ENCODE measurements at regions of chrX and their contacts with region 1.

Region 1: GRCh38 chrX:51837921-51838320 is 55.5 kb upstream of the MAGED1 start:
- DNase-seq: peak; percentile 3 to 8
- ATAC-seq: no peak
- H3K4me3 ChIP-seq: no peak overlapping the region
- H3K27ac ChIP-seq: no peak overlapping the region
- H3K4me1 ChIP-seq: no peaks in the 10 kb centered on the region
- H3K27me3 ChIP-seq: no peaks in the 10 kb centered on the region
- CTCF ChIP-seq: no peak
- POLR2A ChIP-seq: no peak

Region 2: DNA sequence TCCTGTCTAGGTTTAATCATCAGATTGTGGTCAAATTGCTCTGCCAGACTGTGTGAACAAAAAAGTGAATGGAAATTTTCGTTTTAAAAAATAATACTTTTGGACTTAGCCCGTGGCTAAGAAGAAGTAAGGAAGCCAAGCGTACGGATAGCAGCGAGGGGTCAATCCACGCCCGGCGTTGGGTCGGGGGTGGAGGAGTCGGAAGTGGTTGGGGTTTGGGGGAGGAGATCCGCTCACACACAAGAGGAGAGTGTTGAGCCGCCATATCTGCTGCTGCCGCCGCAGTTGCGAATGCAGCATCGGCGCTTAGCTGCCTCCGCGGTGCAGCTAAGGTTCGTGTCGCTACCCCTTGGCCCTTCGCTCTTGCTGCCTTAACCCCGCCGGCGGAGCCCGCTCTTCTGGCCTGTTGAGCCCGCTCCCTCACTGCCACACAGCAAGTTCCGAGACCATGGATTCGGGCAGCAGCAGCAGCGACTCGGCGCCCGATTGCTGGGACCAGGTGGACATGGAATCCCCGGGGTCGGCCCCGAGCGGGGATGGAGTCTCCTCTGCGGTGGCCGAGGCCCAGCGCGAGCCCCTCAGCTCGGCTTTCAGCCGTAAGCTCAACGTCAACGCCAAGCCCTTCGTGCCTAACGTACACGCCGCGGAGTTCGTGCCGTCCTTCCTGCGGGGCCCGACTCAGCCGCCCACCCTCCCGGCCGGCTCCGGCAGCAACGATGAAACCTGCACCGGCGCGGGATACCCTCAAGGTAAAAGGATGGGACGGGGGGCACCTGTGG is 94.6 kb before region 1 on chrX and contains the start of gene GSPT2:
- in situ Hi-C with region 1: loop called in 1 of 4 experiments (anchors 25 kb)
- intact Hi-C with region 1: no loop called
- DNase-seq: peak; percentile 7 to 35
- ATAC-seq: peak; percentile 73 to 78
- H3K4me3 ChIP-seq: peak within 1 kb of the TSS; percentile 58 to 76 (median 71)
- H3K27ac ChIP-seq: peak within 1 kb of the TSS; percentile 51 to 66 (median 62)
- H3K4me1 ChIP-seq: no peaks in the 10 kb centered on the region
- H3K27me3 ChIP-seq: peaks cover 0 to 8% (median 0%) of the 10 kb centered on the region in 3 donors
- CTCF ChIP-seq: no peak
- POLR2A ChIP-seq: peak; percentile 19 to 25
- total RNA-seq, gene GSPT2: 1.4 to 2.8 (median 1.8) TPM

Region 3: GRCh38 chrX:51975811-51976210 is 137.9 kb after region 1 on chrX:
- in situ Hi-C with region 1: no loop called
- intact Hi-C with region 1: no loop called
- DNase-seq: no peak
- ATAC-seq: no peak
- H3K4me3 ChIP-seq: no peak overlapping the region
- H3K27ac ChIP-seq: no peak overlapping the region
- H3K4me1 ChIP-seq: no peaks in the 10 kb centered on the region
- H3K27me3 ChIP-seq: peaks cover 0 to 3% (median 0%) of the 10 kb centered on the region in 3 donors
- CTCF ChIP-seq: no peak
- POLR2A ChIP-seq: no peak

Region 4: GRCh38 chrX:52363247-52363883 is 525.4 kb after region 1 on chrX:
- in situ Hi-C with region 1: no loop called
- intact Hi-C with region 1: no loop called
- DNase-seq: no peak
- ATAC-seq: no peak
- H3K4me3 ChIP-seq: no peak overlapping the region
- H3K27ac ChIP-seq: no peak overlapping the region
- H3K4me1 ChIP-seq: no peaks in the 10 kb centered on the region
- H3K27me3 ChIP-seq: peaks cover 0 to 16% (median 0%) of the 10 kb centered on the region in 3 donors
- CTCF ChIP-seq: no peak
- POLR2A ChIP-seq: no peak